ENCODE measurements at regions of chrX and their contacts with region 1.

Region 1: GRCh38 chrX:63686878-63687714 is 97.9 kb downstream of the ARHGEF9 start:
- DNase-seq: peak; percentile 42
- H3K4me3 ChIP-seq: no peak overlapping the region
- H3K27ac ChIP-seq: no peak overlapping the region
- H3K4me1 ChIP-seq: no peaks in the 10 kb centered on the region
- H3K27me3 ChIP-seq: no peaks in the 10 kb centered on the region
- CTCF ChIP-seq: peak; percentile 82
- EP300 ChIP-seq: no peak
- RAD21 ChIP-seq: peak; percentile 78

Region 2: DNA sequence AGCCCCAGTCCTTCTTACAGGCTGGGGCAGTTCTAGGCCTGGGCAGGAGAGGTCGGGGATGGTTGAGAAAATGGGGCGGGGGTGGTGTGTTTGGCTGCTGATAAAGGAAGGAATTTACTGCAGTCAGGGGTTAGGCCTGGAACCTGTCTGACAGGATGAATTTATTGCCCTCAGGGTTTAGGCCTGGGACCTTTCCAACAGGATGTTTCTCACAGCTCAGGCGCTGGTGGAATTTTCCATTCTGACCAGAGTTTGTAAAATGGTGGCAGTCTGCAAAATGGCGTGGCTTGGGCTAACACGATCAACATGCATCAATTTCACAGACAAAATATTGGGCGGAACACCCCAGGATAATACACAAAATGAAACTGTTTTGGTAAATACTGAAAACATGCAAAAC is 252.4 kb before region 1 on chrX:
- CTCF ChIA-PET with region 1: no interaction called
- POLR2A ChIA-PET with region 1: no interaction called
- DNase-seq: no peak
- H3K4me3 ChIP-seq: no peak overlapping the region
- H3K27ac ChIP-seq: no peak overlapping the region
- H3K4me1 ChIP-seq: no peaks in the 10 kb centered on the region; a peak in 1 of 4 replicates
- H3K27me3 ChIP-seq: no peaks in the 10 kb centered on the region
- CTCF ChIP-seq: no peak
- EP300 ChIP-seq: no peak
- RAD21 ChIP-seq: no peak

Region 3: GRCh38 chrX:63675716-63676115 is 11.4 kb before region 1 on chrX:
- CTCF ChIA-PET with region 1: interaction called, 16 read pairs
- POLR2A ChIA-PET with region 1: no interaction called
- DNase-seq: no peak
- H3K4me3 ChIP-seq: no peak overlapping the region
- H3K27ac ChIP-seq: no peak overlapping the region
- H3K4me1 ChIP-seq: no peaks in the 10 kb centered on the region
- H3K27me3 ChIP-seq: no peaks in the 10 kb centered on the region
- CTCF ChIP-seq: no peak
- EP300 ChIP-seq: no peak
- RAD21 ChIP-seq: no peak

Region 4: GRCh38 chrX:63702556-63702955 is 15.5 kb after region 1 on chrX:
- CTCF ChIA-PET with region 1: interaction called, 11 read pairs
- POLR2A ChIA-PET with region 1: no interaction called
- DNase-seq: no peak
- H3K4me3 ChIP-seq: no peak overlapping the region
- H3K27ac ChIP-seq: no peak overlapping the region
- H3K4me1 ChIP-seq: no peaks in the 10 kb centered on the region
- H3K27me3 ChIP-seq: no peaks in the 10 kb centered on the region
- CTCF ChIP-seq: no peak
- EP300 ChIP-seq: no peak
- RAD21 ChIP-seq: no peak

Region 5: GRCh38 chrX:63718010-63718694 is 31.1 kb after region 1 on chrX:
- CTCF ChIA-PET with region 1: no interaction called
- POLR2A ChIA-PET with region 1: no interaction called
- DNase-seq: no peak
- H3K4me3 ChIP-seq: no peak overlapping the region
- H3K27ac ChIP-seq: no peak overlapping the region
- H3K4me1 ChIP-seq: no peaks in the 10 kb centered on the region; a peak in 1 of 4 replicates
- H3K27me3 ChIP-seq: no peaks in the 10 kb centered on the region
- CTCF ChIP-seq: no peak
- EP300 ChIP-seq: no peak
- RAD21 ChIP-seq: no peak

Region 6: GRCh38 chrX:63930140-63930539 is 243.0 kb after region 1 on chrX:
- CTCF ChIA-PET with region 1: no interaction called
- POLR2A ChIA-PET with region 1: no interaction called
- DNase-seq: peak; percentile 2
- H3K4me3 ChIP-seq: no peak overlapping the region
- H3K27ac ChIP-seq: no peak overlapping the region
- H3K4me1 ChIP-seq: no peaks in the 10 kb centered on the region
- H3K27me3 ChIP-seq: no peaks in the 10 kb centered on the region
- CTCF ChIP-seq: peak; percentile 39
- EP300 ChIP-seq: no peak
- RAD21 ChIP-seq: peak; percentile 43

Region 7: DNA sequence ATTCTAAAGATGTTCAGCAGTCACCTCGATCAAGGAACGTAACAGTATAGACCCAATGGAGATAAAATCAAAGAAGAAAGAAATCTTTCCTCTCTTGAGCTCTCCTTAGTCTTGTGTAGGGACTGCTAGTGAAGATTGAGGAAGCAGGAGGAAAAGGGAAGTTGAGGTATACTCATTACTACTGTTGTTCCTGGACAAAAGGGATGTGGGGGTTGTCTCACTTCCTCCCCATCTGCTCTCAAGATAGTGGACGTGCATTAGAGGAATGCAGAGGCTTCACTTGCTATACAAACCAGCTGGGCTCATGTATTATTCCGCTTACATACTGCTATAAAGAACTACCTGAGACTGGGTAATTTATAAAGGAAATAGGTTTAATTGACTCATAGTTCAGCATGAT is 306.8 kb after region 1 on chrX:
- CTCF ChIA-PET with region 1: no interaction called
- POLR2A ChIA-PET with region 1: no interaction called
- DNase-seq: no peak
- H3K4me3 ChIP-seq: no peak overlapping the region
- H3K27ac ChIP-seq: no peak overlapping the region
- H3K4me1 ChIP-seq: no peaks in the 10 kb centered on the region
- H3K27me3 ChIP-seq: no peaks in the 10 kb centered on the region
- CTCF ChIP-seq: no peak
- EP300 ChIP-seq: no peak
- RAD21 ChIP-seq: no peak

Measured in SK-N-SH (cell line).